ENCODE measurements at regions of chr15 and their contacts with region 1.

Region 1: GRCh38 chr15:43299411-43299810 is 31.0 kb downstream of the LCMT2 start:
- DNase-seq: no peak
- H3K4me3 ChIP-seq: no peak overlapping the region
- H3K27ac ChIP-seq: no peak overlapping the region
- H3K4me1 ChIP-seq: no peaks in the 10 kb centered on the region
- H3K27me3 ChIP-seq: peaks cover 11% of the 10 kb centered on the region
- CTCF ChIP-seq: no peak

Region 2: DNA sequence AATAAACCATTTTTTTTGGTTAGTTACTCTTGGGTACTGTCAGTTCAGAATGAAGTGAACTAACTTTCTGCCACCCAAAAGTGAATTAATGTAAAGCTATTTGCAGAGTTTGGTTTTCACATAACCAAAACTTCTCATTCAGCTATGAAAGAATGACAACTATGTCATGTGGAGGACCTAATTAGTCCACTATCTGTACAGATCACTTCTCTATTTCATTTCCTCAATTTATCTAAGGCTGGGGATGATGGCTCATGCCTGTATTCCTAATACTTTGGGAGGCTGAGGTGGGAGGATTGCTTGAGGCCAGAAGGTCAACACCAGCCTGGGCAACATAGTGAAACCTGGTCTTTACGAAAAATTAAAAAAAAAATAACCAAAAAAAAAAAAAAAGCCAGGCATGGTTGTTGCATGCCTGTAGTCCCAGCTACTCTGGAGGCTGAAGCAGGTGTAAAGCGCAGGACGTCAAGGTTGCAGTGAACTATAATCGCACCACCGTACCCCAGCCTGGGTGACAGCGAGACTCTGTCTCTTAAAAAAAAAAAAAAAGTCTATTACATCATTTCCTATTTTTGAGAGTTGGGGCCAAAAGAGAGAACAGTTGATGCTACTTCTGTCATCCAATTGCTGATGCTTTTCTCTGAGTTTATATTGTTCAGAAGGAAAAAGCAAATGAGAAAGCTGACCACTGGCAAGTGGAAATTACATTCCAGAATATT is 509.7 kb after region 1 on chr15:
- CTCF ChIA-PET with region 1: no interaction called
- POLR2A ChIA-PET with region 1: interaction called, 11 read pairs
- intact Hi-C with region 1: no loop called
- DNase-seq: no peak
- H3K4me3 ChIP-seq: no peak overlapping the region
- H3K27ac ChIP-seq: peak overlapping the region; percentile 10
- H3K4me1 ChIP-seq: no peaks in the 10 kb centered on the region
- H3K27me3 ChIP-seq: no peaks in the 10 kb centered on the region
- CTCF ChIP-seq: no peak

Measured in A673 (cell line).